Dorsolateral prefrontal cortex (tissue), 120 donors: ENCODE measurements at regions of chr4 and their contacts with region 1.

Region 1: DNA sequence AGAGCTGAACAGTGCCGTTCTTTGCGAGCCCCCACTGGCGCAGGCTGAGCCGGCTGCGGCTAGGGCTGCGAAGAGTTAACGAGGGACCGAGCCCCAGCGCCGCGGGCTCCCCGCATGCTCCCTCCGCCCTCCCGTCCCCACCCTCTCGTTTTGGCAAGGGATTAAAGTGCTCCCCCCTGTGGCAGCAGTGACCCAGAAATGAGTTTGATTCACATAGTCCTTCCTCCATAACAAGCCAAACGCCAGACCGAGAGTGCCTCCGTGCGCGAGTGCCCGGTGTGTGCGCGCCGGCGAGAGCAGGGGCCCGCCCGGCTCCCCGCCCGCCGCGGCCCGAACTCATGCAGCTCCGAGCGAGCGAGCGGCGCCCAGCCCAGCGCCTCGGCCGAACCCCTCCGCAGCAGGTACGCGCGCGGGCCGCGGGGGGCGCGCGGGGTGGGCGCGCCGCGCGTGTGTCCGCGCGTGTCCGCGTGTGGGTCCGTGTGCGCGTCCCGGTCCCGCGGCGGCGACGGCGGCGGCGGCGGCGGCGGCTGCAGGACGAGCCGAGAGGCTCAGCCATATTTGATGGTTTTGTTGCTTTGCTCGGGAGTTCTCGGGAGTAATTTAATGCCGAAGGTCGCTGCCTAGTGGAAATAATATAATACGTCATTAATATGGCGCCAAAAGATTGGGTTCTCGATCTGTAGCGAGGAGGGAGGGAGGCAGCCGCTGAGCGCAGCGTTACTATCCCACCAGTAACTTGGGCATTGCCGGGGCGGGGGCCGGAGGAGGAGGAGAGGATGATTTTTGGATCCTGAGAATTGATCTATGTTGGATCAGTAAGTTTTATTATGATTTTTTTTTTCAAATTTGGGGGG is at the start of gene JADE1:
- DNase-seq: peak; percentile 72 to 93 (median 89)
- H3K4me3 ChIP-seq: peak within 1 kb of the TSS; percentile 61 to 95 (median 84)
- H3K27ac ChIP-seq: peak within 1 kb of the TSS; percentile 46 to 98 (median 93)
- H3K27me3 ChIP-seq: no peaks in the 10 kb centered on the region
- CTCF ChIP-seq: peak in 53 of 56 donors; percentile 19 to 73 (median 55)
- total RNA-seq, gene JADE1: 21.3 to 55.2 (median 36.1) TPM

Region 2: GRCh38 chr4:128287871-128288688 is 521.6 kb before region 1 on chr4:
- intact Hi-C with region 1: loop called (anchors 2 to 5 kb)
- DNase-seq: peak; percentile 97 to 98 (median 98)
- H3K4me3 ChIP-seq: peak overlapping the region; percentile 71 to 99 (median 85)
- H3K27ac ChIP-seq: peak overlapping the region; percentile 67 to 98 (median 92)
- H3K27me3 ChIP-seq: no peaks in the 10 kb centered on the region
- CTCF ChIP-seq: peak in 39 of 56 donors; percentile 5 to 53 (median 33)

Region 3: DNA sequence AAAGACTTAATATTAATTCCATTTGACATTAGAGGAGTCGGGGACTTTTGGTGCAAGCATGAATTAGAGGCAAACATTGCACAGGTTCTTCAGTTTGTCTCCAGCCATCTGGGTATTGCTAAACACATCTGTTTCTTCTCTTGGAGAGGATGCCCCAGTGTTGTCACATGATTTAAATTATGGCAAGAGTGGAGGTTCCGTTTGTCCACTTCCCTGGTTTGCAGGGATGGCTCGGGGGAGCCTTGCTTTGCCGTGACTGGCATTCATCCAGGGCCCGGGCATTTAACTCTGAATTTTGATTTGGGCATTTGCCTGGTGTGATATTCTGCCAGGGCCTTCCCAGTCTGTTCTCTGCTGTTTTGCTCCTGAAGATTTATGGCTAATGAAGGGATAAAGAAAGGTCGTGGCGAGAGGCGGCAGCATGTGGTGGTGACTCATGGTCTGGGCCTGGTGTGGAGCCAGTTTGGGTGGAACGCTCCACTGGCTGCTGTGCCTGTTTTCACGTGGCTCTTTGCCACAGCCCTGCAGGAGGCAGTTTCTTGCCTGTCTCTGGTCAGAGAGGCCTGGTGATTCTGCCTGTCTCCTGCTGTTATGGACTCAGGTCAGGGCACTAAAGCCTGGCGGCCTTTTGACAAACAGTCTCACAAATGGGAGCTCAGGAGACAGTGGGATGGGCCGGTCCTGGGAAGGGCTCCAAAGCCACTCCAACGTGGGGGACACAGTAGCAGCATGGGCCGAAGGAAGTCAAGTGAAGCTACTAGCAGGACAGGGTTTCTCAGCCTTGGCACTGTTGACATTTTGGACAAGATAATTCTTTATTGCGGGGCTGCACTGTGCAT is 422.7 kb before region 1 on chr4:
- intact Hi-C with region 1: loop called (anchors 5 kb)
- DNase-seq: peak; percentile 69 to 93 (median 86)
- H3K4me3 ChIP-seq: peak overlapping the region in 45 of 59 donors; percentile 2 to 51 (median 28)
- H3K27ac ChIP-seq: peak overlapping the region; percentile 48 to 95 (median 84)
- H3K27me3 ChIP-seq: no peaks in the 10 kb centered on the region
- CTCF ChIP-seq: peak in 15 of 56 donors; percentile 8 to 43 (median 23)

Region 4: DNA sequence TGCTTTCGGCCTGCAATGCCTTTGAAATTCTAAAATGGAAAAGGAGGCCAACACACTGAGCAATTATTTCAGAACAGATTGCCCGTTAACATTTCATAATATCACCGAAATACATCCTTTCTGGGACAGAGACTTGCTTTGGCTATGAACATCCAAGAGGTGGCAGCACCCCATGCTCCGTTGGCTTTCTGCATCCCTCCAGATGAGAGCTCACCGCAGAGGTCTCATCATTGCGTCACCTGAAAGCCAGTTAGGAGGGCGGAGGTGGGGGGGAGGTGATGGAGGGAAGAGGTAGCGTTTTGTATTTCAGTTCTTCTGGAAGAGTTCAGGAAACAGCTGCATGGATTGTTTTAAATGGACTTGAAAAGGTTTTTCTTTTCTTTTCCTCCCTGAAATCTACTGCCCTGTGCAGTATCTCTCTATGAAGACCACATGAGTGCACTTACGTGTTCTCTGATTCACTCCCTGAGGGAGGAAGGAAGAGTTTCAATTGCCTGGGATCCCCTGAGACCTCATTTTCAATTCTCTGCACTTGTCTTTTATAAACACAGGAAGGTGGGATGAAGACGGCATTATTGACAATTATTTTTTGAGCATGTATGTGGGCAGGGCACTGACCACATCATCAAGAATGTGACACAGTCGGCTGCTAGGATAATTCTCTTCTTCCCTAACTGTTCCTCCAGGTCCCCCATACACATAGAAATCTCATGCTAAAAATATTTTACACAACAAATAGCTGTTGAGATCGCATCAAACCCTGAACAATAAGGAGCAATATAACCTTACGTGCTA is 355.2 kb before region 1 on chr4:
- intact Hi-C with region 1: loop called (anchors 10 kb)
- DNase-seq: peak; percentile 32 to 87 (median 78)
- H3K4me3 ChIP-seq: peak overlapping the region in 21 of 59 donors; percentile 2 to 39 (median 24)
- H3K27ac ChIP-seq: peak overlapping the region in 3 of 59 donors; percentile 29 to 59 (median 30)
- H3K27me3 ChIP-seq: no peaks in the 10 kb centered on the region
- CTCF ChIP-seq: peak; percentile 42 to 83 (median 75)

Region 5: GRCh38 chr4:128574706-128575105 is 235.0 kb before region 1 on chr4:
- intact Hi-C with region 1: loop called (anchors 2 to 5 kb)
- DNase-seq: peak; percentile 24 to 94 (median 80)
- H3K4me3 ChIP-seq: no peak overlapping the region
- H3K27ac ChIP-seq: no peak overlapping the region
- H3K27me3 ChIP-seq: no peaks in the 10 kb centered on the region
- CTCF ChIP-seq: peak; percentile 59 to 94 (median 80)

Region 6: DNA sequence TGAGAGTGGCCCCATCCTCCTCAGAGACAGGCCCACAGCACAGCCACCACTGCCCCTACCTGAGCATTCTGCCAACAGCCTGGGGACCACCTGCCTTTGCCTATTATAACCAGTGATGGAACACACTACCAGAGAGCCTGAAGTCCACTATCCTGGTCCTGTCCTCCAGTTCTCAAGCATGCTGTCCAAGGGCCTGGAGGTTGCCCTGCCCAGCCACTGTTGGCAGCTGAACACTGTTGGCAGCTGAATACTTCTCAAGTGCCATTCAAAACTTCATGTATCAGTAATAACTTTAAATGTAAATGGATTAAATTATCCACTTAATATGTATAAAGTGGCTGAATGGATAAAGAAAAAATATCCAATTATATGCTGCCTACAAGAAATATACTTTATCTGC is 194.5 kb before region 1 on chr4:
- intact Hi-C with region 1: no loop called
- DNase-seq: no peak
- H3K4me3 ChIP-seq: no peak overlapping the region
- H3K27ac ChIP-seq: no peak overlapping the region
- H3K27me3 ChIP-seq: no peaks in the 10 kb centered on the region
- CTCF ChIP-seq: no peak

Region 7: GRCh38 chr4:128649575-128650205 is 160.0 kb before region 1 on chr4:
- intact Hi-C with region 1: no loop called
- DNase-seq: no peak
- H3K4me3 ChIP-seq: no peak overlapping the region
- H3K27ac ChIP-seq: no peak overlapping the region
- H3K27me3 ChIP-seq: no peaks in the 10 kb centered on the region
- CTCF ChIP-seq: no peak

Region 8: GRCh38 chr4:128663336-128663735 is 146.4 kb before region 1 on chr4:
- intact Hi-C with region 1: loop called in 1 of 2 experiments (anchors 10 kb)
- DNase-seq: no peak
- H3K4me3 ChIP-seq: no peak overlapping the region
- H3K27ac ChIP-seq: no peak overlapping the region
- H3K27me3 ChIP-seq: no peaks in the 10 kb centered on the region
- CTCF ChIP-seq: no peak

Region 9: GRCh38 chr4:128863312-128864075 is 53.8 kb after region 1 on chr4:
- intact Hi-C with region 1: loop called (anchors 2 to 5 kb)
- DNase-seq: peak; percentile 43 to 85 (median 78)
- H3K4me3 ChIP-seq: peak overlapping the region in 1 of 59 donors; percentile 3
- H3K27ac ChIP-seq: peak overlapping the region in 29 of 59 donors; percentile 4 to 65 (median 42)
- H3K27me3 ChIP-seq: no peaks in the 10 kb centered on the region
- CTCF ChIP-seq: peak; percentile 81 to 99 (median 92)